ENCODE measurements at regions of chr10 and their contacts with region 1.

Region 1: DNA sequence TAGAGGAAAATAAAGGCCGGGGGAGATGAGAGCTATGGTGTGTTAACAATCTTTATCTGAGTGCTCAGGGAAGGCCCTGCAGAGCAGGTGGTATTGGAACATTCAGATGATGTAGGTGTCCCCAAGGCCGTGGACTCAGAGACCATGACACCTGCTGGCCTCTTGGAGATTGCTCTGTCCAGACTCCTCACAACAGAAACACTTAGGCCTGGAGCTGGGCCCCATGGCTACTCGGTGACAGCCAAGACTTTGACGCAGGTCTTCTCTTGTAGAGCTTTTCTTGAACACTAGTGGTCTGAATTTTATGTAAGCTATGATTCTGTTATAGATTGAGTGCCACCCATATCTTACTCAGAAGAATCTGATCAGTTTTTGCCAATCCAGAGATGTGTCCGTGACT is 13.4 kb downstream of the AKR1E2 start:
- DNase-seq: no peak
- ATAC-seq: no peak
- H3K4me3 ChIP-seq: no peak overlapping the region
- H3K4me3 Mint-ChIP-seq: no peak overlapping the region
- H3K27ac ChIP-seq: no peak overlapping the region
- H3K27ac Mint-ChIP-seq: no peak overlapping the region
- H3K4me1 ChIP-seq: peaks cover 25% of the 10 kb centered on the region
- H3K4me1 Mint-ChIP-seq: peaks cover 23% of the 10 kb centered on the region
- H3K27me3 ChIP-seq: no peaks in the 10 kb centered on the region
- H3K27me3 Mint-ChIP-seq: no peaks in the 10 kb centered on the region
- CTCF ChIP-seq: no peak

Region 2: DNA sequence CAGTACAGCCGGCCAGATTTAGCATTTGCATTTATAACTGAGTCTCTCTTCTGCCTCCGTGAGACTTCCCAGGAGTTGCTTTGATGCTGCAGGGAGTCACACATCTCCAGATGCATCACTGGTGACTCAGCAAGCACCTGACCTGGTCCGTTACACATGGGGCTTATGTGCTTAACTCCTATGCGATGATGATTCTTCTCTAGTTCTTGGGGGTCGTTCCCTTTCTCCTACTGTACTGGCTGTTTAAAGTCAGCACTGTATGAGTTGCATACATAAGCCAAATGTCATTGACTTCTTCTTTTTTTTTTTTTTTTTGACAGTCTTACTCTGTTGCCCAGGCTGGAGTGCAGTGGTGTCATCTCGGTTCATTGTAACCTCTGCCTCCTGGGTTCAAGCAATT is 26.4 kb before region 1 on chr10:
- CTCF ChIA-PET with region 1: interaction called, 39 read pairs
- POLR2A ChIA-PET with region 1: interaction called, 3 read pairs
- intact Hi-C with region 1: no loop called
- DNase-seq: no peak
- ATAC-seq: no peak
- H3K4me3 ChIP-seq: no peak overlapping the region
- H3K4me3 Mint-ChIP-seq: no peak overlapping the region
- H3K27ac ChIP-seq: no peak overlapping the region
- H3K27ac Mint-ChIP-seq: no peak overlapping the region
- H3K4me1 ChIP-seq: no peaks in the 10 kb centered on the region
- H3K4me1 Mint-ChIP-seq: no peaks in the 10 kb centered on the region
- H3K27me3 ChIP-seq: peaks cover 0 to 3% of the 10 kb centered on the region in 2 experiments
- H3K27me3 Mint-ChIP-seq: peaks cover 7% of the 10 kb centered on the region
- CTCF ChIP-seq: no peak

Measured in CD8-positive, alpha-beta T cell (primary cell).